HepG2 (cell line): ENCODE measurements at regions of chr20 and their contacts with region 1.

Region 1: GRCh38 chr20:18202966-18203365 is 65.3 kb downstream of the KAT14 start:
- DNase-seq: no peak
- ATAC-seq: peak; percentile 23; the same call in 2 of the 3 replicates
- H3K4me3 ChIP-seq: no peak overlapping the region
- H3K27ac ChIP-seq: no peak overlapping the region
- H3K4me1 ChIP-seq: no peaks in the 10 kb centered on the region
- H3K27me3 ChIP-seq: no peaks in the 10 kb centered on the region
- CTCF ChIP-seq: no peak
- EP300 ChIP-seq: no peak
- POLR2A ChIP-seq: no peak
- RAD21 ChIP-seq: no peak

Region 2: GRCh38 chr20:18188434-18188833 is 14.5 kb before region 1 on chr20:
- CTCF ChIA-PET with region 1: no interaction called
- POLR2A ChIA-PET with region 1: no interaction called
- in situ Hi-C with region 1: no loop called
- intact Hi-C with region 1: loop called (anchors 1 kb)
- DNase-seq: no peak
- ATAC-seq: no peak
- H3K4me3 ChIP-seq: no peak overlapping the region
- H3K27ac ChIP-seq: no peak overlapping the region
- H3K4me1 ChIP-seq: peaks cover 7% of the 10 kb centered on the region
- H3K27me3 ChIP-seq: no peaks in the 10 kb centered on the region
- CTCF ChIP-seq: no peak
- EP300 ChIP-seq: no peak
- POLR2A ChIP-seq: no peak
- RAD21 ChIP-seq: no peak